CD4-positive, alpha-beta memory T cell (primary cell): ENCODE measurements at regions of chr6 and their contacts with region 1.

Region 1: DNA sequence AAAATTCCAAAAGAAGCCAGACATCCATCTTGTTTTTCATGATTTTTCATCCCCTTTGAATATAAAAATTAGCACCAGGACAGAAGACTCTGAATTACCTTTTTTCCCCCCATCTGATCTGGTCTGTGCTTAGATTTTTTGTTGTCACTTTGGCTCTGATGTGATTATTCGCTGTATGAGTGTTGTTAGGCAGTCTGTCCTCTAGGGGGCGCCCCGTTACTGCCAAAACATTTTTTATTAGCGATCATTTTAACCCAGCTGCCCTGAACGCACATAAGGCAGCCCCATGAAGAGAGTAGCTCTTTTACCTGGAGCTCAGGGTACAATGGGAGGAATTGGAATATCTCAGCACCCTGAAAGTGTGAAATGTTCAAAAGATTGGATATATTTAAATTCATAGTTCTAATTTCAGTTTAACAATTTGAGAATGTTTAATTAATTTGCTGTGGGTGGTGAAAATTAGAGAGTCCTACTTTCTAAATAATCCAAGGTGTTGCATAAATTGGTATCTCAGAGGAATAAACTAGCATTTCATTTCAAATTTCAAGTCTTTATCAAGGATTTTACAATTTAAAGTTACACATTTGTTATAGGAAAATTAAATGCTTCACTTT is 60.8 kb downstream of the PRPH2 start:
- DNase-seq: peak; percentile 80 to 84 (median 84)
- H3K4me3 ChIP-seq: no peak overlapping the region
- H3K4me3 Mint-ChIP-seq: no peak overlapping the region
- H3K27ac ChIP-seq: no peak overlapping the region
- H3K27ac Mint-ChIP-seq: peak overlapping the region in 4 of 7 donors; percentile 0 to 15 (median 2)
- H3K4me1 ChIP-seq: no peaks in the 10 kb centered on the region
- H3K4me1 Mint-ChIP-seq: peaks cover 0 to 2% (median 0%) of the 10 kb centered on the region in 4 donors
- H3K27me3 ChIP-seq: no peaks in the 10 kb centered on the region
- H3K27me3 Mint-ChIP-seq: no peaks in the 10 kb centered on the region

Region 2: DNA sequence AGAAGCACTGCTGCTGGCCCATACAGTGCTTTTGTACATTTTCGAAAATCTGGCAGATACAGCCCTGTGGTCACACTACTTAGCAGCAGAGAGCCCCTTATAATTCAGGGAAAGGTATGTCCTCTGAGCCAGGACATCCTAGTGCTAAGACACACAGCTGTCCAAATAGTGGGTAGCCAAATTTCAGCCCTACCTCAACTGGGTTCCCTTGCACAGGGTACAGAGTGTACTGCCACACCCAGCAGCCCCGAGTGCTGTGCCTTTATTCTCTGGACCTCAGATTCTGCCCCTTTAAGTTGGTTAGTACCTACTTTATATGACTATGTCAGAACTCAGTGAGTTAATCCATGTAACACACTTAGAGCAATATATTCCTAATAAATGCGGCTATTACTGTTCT is 13.1 kb after region 1 on chr6:
- CTCF ChIA-PET with region 1: interaction called, 10 read pairs
- POLR2A ChIA-PET with region 1: no interaction called
- intact Hi-C with region 1: no loop called
- DNase-seq: no peak
- H3K4me3 ChIP-seq: no peak overlapping the region
- H3K4me3 Mint-ChIP-seq: no peak overlapping the region
- H3K27ac ChIP-seq: no peak overlapping the region
- H3K27ac Mint-ChIP-seq: peak overlapping the region in 1 of 7 donors; percentile 30
- H3K4me1 ChIP-seq: no peaks in the 10 kb centered on the region
- H3K4me1 Mint-ChIP-seq: peaks cover 0 to 5% (median 0%) of the 10 kb centered on the region in 4 donors
- H3K27me3 ChIP-seq: no peaks in the 10 kb centered on the region
- H3K27me3 Mint-ChIP-seq: no peaks in the 10 kb centered on the region

Region 3: GRCh38 chr6:42896178-42896719 is 234.6 kb after region 1 on chr6:
- CTCF ChIA-PET with region 1: interaction called, 15 read pairs
- POLR2A ChIA-PET with region 1: interaction called, 3 read pairs
- intact Hi-C with region 1: loop called (anchors 1 kb)
- DNase-seq: no peak
- H3K4me3 ChIP-seq: no peak overlapping the region
- H3K4me3 Mint-ChIP-seq: no peak overlapping the region
- H3K27ac ChIP-seq: no peak overlapping the region
- H3K27ac Mint-ChIP-seq: no peak overlapping the region
- H3K4me1 ChIP-seq: peaks cover 4% of the 10 kb centered on the region
- H3K4me1 Mint-ChIP-seq: peaks cover 0 to 6% (median 2%) of the 10 kb centered on the region in 4 donors
- H3K27me3 ChIP-seq: no peaks in the 10 kb centered on the region
- H3K27me3 Mint-ChIP-seq: no peaks in the 10 kb centered on the region